Activated CD4-positive, alpha-beta T cell treated with anti-CD3 and anti-CD28 coated beads, Interleukin-2, amount 10 ng/mL, durations not matched to agents 24 days and 14 days (primary cell): ENCODE measurements at regions of chr1 and their contacts with region 1.

Region 1: DNA sequence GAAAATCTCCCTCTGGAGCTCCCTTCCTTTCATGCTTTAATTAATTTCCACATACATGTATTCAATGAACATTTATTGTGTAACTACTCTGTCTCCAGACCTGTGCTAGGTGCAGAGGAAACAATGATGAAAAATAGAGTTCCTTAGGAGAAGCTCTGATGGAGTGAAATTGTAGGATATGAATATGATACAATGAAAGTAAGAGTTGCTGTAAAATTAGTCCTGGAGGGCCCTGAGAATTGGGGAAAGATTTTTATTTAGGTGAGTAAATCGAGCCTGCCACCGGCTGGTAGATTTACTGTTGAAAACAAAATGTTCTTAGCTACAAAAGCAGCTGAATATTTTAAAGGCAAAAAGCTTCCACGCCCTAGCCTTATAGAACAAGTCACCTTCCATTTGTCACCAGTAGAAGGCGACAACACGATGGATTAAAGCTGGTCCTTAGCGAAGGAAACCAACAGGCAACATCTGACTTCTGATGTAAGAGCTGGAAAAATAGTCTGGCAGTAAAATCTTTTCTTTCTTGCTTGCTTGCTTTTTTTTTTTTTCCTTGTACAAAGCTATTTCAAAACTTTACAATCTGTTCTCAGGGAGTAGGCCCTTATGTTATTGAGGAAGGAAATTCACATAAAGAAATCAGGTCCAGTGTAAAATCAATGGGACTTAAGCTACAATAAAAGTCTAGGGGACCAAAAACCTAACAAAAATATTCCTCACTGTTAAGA is 82.0 kb upstream of the ROR1 start:
- DNase-seq: peak; percentile 81
- H3K4me3 Mint-ChIP-seq: no peak overlapping the region
- H3K27ac Mint-ChIP-seq: no peak overlapping the region
- H3K4me1 Mint-ChIP-seq: peaks cover 1% of the 10 kb centered on the region
- H3K27me3 Mint-ChIP-seq: peaks cover 2% of the 10 kb centered on the region

Region 2: DNA sequence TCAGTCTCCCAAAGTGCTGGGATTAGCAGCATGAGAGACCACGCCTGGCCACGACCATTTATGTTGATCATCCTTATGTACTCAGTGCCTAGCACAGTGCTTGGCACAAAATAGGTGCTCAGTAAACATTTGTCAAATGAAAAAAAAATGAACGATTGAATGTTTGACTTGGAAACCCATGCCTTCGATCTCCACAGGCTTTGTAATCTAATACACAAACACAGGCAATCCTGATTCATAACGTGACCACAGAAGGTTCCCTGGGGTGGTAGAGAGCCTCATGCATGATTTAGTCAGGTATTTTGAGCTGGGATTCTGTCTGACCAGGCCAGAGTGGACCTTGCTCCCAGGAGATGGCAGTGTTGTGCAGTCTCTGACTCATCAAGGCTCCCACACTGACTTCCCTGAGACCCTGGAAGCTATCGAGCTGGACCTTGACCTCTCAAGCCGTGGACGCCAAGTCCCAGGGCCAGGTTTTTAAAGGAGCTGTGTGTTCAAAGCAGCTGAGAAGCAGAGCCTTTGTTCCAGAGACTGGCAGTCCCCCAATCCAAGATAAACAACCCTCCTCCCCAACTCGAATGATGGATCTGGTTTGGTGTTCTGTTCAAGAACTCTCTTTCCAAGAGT is 17.5 kb before region 1 on chr1:
- intact Hi-C with region 1: no loop called
- DNase-seq: no peak
- H3K4me3 Mint-ChIP-seq: no peak overlapping the region
- H3K27ac Mint-ChIP-seq: no peak overlapping the region
- H3K4me1 Mint-ChIP-seq: no peaks in the 10 kb centered on the region
- H3K27me3 Mint-ChIP-seq: no peaks in the 10 kb centered on the region

Region 3: GRCh38 chr1:63917571-63918417 is 225.9 kb after region 1 on chr1:
- intact Hi-C with region 1: loop called (anchors 5 kb)
- DNase-seq: peak; percentile 66
- H3K4me3 Mint-ChIP-seq: no peak overlapping the region
- H3K27ac Mint-ChIP-seq: no peak overlapping the region
- H3K4me1 Mint-ChIP-seq: no peaks in the 10 kb centered on the region
- H3K27me3 Mint-ChIP-seq: peaks cover 2% of the 10 kb centered on the region

Region 4: DNA sequence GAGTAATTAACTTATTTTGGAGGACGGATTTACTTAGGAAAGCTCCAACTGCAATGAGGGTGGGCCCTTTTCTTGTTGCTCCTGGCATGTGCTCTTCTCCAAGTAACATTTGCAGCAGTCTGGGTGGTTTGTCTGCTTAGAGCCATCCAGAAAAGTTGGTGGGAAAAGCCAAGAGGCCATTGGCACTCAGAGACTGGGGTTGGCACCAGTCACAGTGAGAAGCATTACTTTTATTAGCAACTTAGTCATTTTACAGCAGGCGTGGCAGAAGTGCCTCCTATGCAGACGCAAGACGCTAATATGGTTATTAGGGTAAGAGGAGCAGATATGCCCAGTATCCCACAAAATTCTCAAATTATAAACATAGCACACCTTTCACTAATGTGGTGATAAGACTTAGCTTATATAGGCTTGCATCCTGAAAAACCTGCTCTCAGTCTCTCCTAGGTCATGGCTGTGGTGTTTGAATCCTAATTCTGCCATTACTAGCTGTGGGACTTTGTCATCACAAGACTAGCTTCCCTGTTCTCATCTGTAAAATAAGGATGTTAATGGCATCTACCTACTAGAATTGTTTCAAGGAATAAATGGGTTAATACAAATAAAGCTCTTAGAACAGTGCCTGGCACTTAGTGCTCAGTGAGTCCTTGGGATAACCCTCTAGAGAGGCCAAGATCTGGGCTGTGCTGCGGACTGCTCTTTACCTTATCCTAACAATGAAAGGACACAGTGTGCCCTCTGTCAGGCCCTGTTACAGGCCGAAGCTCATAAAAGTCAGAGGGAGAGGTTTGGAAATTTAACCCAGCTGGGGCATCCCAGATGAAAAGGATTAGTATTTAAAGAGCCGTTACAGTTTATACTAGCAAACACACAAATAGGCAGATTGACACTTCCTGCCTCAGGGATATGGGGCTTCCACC is 236.6 kb after region 1 on chr1:
- intact Hi-C with region 1: no loop called
- DNase-seq: no peak
- H3K4me3 Mint-ChIP-seq: no peak overlapping the region
- H3K27ac Mint-ChIP-seq: no peak overlapping the region
- H3K4me1 Mint-ChIP-seq: no peaks in the 10 kb centered on the region
- H3K27me3 Mint-ChIP-seq: no peaks in the 10 kb centered on the region

Region 5: GRCh38 chr1:64136752-64137411 is 445.0 kb after region 1 on chr1:
- intact Hi-C with region 1: loop called (anchors 1 kb)
- DNase-seq: peak; percentile 90
- H3K4me3 Mint-ChIP-seq: no peak overlapping the region
- H3K27ac Mint-ChIP-seq: no peak overlapping the region
- H3K4me1 Mint-ChIP-seq: no peaks in the 10 kb centered on the region
- H3K27me3 Mint-ChIP-seq: peaks cover 3% of the 10 kb centered on the region